ENCODE measurements at regions of chr3 and their contacts with region 1.

Region 1: DNA sequence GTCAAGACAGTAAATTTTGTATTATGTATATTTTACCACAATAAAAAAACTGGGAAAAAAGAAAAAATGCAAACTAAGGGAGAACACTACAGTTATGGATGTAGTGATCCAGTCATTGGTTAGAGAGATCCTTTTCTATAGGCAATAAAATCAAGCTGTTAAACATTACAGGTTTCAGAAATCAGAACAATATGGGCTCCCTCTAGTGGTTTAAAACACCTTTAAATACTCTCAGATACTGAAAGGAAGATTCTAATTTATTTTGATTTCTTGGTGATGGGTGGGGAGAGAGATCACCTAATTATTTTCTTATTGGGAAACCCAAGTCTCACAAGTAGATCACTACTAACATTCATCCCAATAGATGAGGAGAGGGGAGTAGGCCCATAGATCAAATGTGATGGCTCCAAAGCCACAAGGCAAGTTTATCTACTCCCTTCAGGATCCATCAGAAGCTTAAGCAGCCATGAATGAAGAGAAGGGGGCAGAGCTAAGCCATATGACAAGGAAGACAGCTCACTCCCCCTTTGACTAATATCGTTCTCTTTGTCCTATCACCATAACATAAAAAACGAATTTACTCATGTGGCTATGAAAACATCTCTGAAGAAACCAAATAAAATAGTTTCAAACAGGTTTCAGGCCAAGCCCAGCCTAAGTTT is 118.6 kb downstream of the ANO10 start:
- DNase-seq: no peak
- ATAC-seq: peak in 6 of 8 donors; percentile 23 to 52 (median 39)
- H3K4me3 ChIP-seq: no peak overlapping the region
- H3K27ac ChIP-seq: peak overlapping the region in 3 of 10 donors; percentile 8 to 24 (median 17)
- H3K4me1 ChIP-seq: peaks cover 0 to 35% (median 8%) of the 10 kb centered on the region in 9 donors
- H3K27me3 ChIP-seq: no peaks in the 10 kb centered on the region
- CTCF ChIP-seq: peak; percentile 45 to 78 (median 63)

Region 2: DNA sequence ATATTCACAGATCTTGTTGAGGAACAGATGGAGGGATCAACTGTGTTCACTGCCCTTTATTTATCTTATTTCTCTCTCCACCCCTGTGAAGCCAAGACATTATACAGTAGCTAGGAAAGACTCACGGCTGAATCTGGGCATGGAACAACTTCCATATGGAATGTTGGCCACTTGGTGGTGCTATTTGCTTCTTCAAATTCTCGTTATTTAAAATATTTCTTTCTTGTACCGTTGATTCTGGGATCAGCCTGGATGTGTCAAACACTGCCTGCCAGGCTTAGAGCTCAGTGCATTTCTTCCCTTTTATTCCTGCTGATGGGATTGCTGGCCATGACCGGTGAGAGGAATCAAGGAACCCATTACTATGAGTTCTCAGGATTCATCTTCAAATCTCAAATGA is 541.6 kb before region 1 on chr3:
- intact Hi-C with region 1: loop called in 4 of 10 experiments (anchors 1 to 10 kb)
- DNase-seq: peak in 1 of 2 donors; percentile 38
- ATAC-seq: peak in 5 of 8 donors; percentile 48 to 67 (median 61)
- H3K4me3 ChIP-seq: no peak overlapping the region
- H3K27ac ChIP-seq: no peak overlapping the region
- H3K4me1 ChIP-seq: no peaks in the 10 kb centered on the region
- H3K27me3 ChIP-seq: no peaks in the 10 kb centered on the region
- CTCF ChIP-seq: peak; percentile 41 to 78 (median 70)

Region 3: GRCh38 chr3:43215663-43216275 is 287.4 kb before region 1 on chr3:
- intact Hi-C with region 1: loop called in 7 of 10 experiments (anchors 5 to 10 kb)
- DNase-seq: no peak
- ATAC-seq: no peak
- H3K4me3 ChIP-seq: no peak overlapping the region
- H3K27ac ChIP-seq: no peak overlapping the region
- H3K4me1 ChIP-seq: peaks cover 0 to 24% (median 11%) of the 10 kb centered on the region in 9 donors
- H3K27me3 ChIP-seq: no peaks in the 10 kb centered on the region
- CTCF ChIP-seq: peak in 2 of 9 donors; percentile 15 to 17

Region 4: DNA sequence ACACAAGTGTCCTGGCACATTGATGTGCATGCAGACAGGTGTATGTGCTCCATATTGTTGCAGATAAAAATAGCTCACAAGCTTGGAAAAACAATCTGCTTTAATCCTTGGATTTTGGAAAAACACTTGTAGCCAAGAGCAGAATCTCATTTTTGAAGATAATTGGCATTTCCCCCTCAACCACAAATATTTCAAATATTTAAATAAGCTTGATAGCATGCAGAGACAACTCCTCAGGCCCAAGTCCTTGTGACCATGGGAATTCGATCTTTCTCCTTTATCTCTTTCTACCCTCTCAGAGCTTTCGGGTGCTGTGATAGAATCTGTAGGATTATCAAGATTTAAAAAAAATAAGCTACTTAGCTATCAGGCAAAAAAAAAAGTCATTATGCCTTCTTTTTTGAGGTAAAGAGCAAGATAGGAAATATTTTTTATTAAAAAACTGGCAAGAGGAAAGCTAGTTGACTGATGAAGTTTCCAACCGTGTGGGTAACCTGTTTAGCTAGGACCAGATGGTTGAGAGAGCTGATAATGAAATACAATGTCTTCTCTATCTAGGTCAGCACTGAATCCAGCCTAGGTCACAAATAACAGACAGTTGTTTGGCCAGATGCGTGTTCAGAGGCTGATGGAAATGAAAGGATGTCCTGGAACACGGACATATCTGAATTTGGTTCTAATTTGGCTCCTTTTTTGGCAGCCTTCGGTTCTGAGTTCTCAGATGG is 271.8 kb before region 1 on chr3:
- intact Hi-C with region 1: loop called in 3 of 10 experiments (anchors 5 to 10 kb)
- DNase-seq: no peak
- ATAC-seq: peak in 2 of 8 donors; percentile 31 to 42
- H3K4me3 ChIP-seq: no peak overlapping the region
- H3K27ac ChIP-seq: peak overlapping the region in 2 of 10 donors; percentile 6 to 57
- H3K4me1 ChIP-seq: peaks cover 0 to 32% (median 10%) of the 10 kb centered on the region in 9 donors
- H3K27me3 ChIP-seq: no peaks in the 10 kb centered on the region
- CTCF ChIP-seq: no peak

Region 5: GRCh38 chr3:43363621-43364266 is 139.5 kb before region 1 on chr3:
- intact Hi-C with region 1: loop called in 1 of 10 experiments (anchors 10 kb)
- DNase-seq: peak; percentile 75 to 76
- ATAC-seq: peak; percentile 60 to 79 (median 66)
- H3K4me3 ChIP-seq: no peak overlapping the region
- H3K27ac ChIP-seq: peak overlapping the region in 9 of 10 donors; percentile 24 to 79 (median 61)
- H3K4me1 ChIP-seq: peaks cover 3 to 45% (median 15%) of the 10 kb centered on the region in 9 donors
- H3K27me3 ChIP-seq: no peaks in the 10 kb centered on the region
- CTCF ChIP-seq: no peak

Region 6: GRCh38 chr3:43389388-43390254 is 113.6 kb before region 1 on chr3:
- intact Hi-C with region 1: loop called in 3 of 10 experiments (anchors 5 to 10 kb)
- DNase-seq: peak in 1 of 2 donors; percentile 69
- ATAC-seq: peak; percentile 65 to 85 (median 76)
- H3K4me3 ChIP-seq: no peak overlapping the region
- H3K27ac ChIP-seq: peak overlapping the region; percentile 31 to 93 (median 82)
- H3K4me1 ChIP-seq: peaks cover 3 to 60% (median 41%) of the 10 kb centered on the region in 9 donors
- H3K27me3 ChIP-seq: no peaks in the 10 kb centered on the region
- CTCF ChIP-seq: no peak

Region 7: DNA sequence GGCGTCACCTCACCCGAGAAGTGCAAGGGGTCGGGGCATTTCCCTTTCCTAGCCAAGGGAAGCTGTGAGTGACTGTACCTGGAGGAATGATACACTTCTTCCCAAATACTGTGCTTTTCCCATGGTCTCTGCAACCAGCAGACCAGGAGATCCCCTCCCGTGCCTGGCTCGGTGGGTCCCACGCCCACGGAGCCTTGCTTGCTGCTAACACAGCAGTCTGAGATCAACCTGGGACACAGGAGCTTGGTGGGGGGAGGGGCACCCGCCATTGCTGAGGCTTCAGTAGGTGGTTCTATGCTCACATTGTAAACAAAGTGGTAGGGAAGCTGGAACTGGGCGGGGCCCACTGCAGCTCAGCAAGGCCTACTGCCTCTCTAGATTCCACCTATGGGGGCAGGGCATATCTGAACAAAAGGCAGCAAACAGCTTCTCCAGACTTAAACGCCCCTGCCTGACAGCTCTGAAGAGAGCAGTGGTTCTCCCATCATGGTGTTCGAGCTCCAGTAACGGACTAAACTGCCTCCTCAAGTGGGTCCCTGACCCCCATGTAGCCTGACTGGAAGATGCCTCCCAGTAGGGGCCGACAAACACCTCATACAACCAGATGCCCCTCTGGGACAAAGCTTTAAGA is 156.2 kb after region 1 on chr3:
- intact Hi-C with region 1: no loop called
- DNase-seq: no peak
- ATAC-seq: no peak
- H3K4me3 ChIP-seq: no peak overlapping the region
- H3K27ac ChIP-seq: no peak overlapping the region
- H3K4me1 ChIP-seq: no peaks in the 10 kb centered on the region
- H3K27me3 ChIP-seq: no peaks in the 10 kb centered on the region
- CTCF ChIP-seq: no peak

Region 8: GRCh38 chr3:44146073-44146472 is 642.9 kb after region 1 on chr3:
- intact Hi-C with region 1: no loop called
- DNase-seq: no peak
- ATAC-seq: no peak
- H3K4me3 ChIP-seq: no peak overlapping the region
- H3K27ac ChIP-seq: no peak overlapping the region
- H3K4me1 ChIP-seq: no peaks in the 10 kb centered on the region
- H3K27me3 ChIP-seq: peaks cover 0 to 24% (median 6%) of the 10 kb centered on the region in 7 donors
- CTCF ChIP-seq: no peak

Measured in heart right ventricle (tissue), 16 donors.